Natural killer cell (primary cell): ENCODE measurements at regions of chr1 and their contacts with region 1.

Region 1: DNA sequence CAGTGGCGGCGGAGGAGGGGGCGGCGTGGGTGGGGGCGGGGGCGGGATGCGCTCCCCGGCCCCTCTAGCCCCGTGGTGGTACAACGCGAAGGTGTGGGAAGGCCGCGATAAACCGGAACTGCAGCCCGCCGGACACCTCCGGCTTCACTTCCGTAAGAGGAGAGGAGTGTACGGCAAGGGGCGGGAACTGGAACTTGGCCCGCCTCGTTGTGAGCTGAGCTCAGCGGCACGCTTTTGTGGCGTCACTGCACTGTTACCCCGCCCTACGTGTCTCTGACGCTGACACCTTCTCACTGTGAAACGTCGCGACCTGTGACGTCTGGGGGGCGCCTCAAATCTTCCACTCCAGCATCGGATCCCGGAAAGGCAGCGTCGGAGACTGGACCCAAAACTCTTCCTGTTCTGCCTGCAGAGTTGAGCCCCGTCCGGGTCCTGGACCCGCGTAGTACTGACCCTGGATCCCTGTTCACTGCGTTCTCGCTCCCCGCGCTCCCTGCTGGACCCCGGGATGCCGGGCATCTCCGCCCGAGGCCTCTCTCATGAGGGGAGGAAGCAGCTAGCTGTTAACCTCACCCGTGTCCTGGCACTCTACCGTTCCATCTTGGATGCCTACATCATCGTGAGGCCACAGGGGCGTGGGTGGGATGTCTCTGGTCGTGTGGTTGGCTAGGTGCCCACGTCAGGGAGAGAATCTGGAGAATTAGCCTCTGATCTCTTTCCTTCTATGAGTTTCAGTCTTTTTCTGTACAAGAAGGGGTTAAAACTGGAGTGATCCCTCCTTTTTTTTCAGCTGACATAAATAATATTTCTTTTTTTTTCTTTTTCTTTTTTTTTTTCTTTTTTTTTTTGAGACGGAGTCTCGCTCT is at the start of gene ISG20L2:
- DNase-seq: peak; percentile 95 to 99
- ATAC-seq: peak; percentile 92 to 98 (median 92)
- H3K4me3 ChIP-seq: peak within 1 kb of the TSS; percentile 98
- H3K4me3 Mint-ChIP-seq: peak within 1 kb of the TSS; percentile 98
- H3K27ac ChIP-seq: peak within 1 kb of the TSS; percentile 99
- H3K27ac Mint-ChIP-seq: no peak within 1 kb of the TSS
- H3K4me1 ChIP-seq: peaks cover 45% of the 10 kb centered on the region
- H3K4me1 Mint-ChIP-seq: peaks cover 15 to 24% of the 10 kb centered on the region in 2 donors
- H3K27me3 ChIP-seq: no peaks in the 10 kb centered on the region
- H3K27me3 Mint-ChIP-seq: no peaks in the 10 kb centered on the region
- CTCF ChIP-seq: no peak
- total RNA-seq, gene ISG20L2: 60.3 to 71.9 (median 68.7) TPM

Region 2: GRCh38 chr1:156282479-156283222 is 446.2 kb before region 1 on chr1 and contains the start of gene SMG5:
- intact Hi-C with region 1: loop called (anchors 5 kb)
- DNase-seq: peak; percentile 92 to 99
- ATAC-seq: peak; percentile 94 to 97 (median 96)
- H3K4me3 ChIP-seq: peak within 1 kb of the TSS; percentile 56
- H3K4me3 Mint-ChIP-seq: peak within 1 kb of the TSS; percentile 98
- H3K27ac ChIP-seq: peak within 1 kb of the TSS; percentile 85
- H3K27ac Mint-ChIP-seq: peak within 1 kb of the TSS; percentile 95 to 97
- H3K4me1 ChIP-seq: peaks cover 25% of the 10 kb centered on the region
- H3K4me1 Mint-ChIP-seq: peaks cover 43 to 45% of the 10 kb centered on the region in 2 donors
- H3K27me3 ChIP-seq: no peaks in the 10 kb centered on the region
- H3K27me3 Mint-ChIP-seq: no peaks in the 10 kb centered on the region
- CTCF ChIP-seq: no peak
- total RNA-seq, gene SMG5: 76.7 to 93.9 (median 87.6) TPM

Region 3: DNA sequence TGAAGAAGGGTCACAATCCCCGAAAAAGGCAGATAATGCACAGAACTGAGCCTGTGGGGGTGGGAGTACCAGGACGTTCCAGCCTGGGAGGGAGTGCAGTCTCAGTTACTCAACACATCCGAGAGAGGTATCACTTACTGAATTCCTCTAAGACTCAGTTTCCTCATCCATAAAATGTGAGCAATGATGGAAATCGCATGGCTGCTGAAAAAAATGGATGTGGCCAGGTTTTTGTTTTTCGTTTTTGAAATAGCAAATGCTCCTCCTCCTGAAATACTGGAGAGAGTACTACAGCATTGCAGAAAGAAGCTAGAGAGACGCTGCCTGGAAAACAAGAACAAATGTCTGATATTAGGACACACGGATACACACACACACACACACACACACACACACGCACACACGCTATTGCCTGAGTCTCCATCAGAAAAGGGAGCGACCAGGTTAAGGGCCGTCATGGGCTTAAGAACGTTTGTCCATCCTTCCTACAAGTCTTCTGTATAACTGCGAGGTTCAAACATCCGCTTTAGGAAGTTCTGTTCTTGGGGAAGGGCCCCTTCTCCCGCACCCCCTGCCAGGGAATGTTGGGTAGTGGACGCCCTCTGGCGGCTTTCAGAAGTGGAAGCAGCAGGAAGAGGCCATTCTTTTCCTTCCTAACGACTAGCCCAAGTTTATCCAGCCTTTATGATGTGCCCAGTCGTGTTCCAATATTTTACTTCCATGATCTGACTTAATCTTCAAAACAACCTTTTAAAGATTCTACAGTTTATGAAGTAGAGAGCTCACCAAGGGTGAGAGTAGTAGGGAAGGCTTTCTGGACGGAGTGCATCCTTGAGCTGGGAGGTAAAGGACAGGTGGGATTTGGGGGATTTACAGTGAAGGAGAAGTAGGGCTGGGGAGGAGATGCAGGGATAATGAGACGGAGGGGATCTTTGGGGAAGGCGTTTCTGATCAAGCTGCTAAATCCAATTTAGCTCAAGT is 50.9 kb before region 1 on chr1:
- intact Hi-C with region 1: no loop called
- DNase-seq: peak in 1 of 2 donors; percentile 65
- ATAC-seq: peak; percentile 24 to 56 (median 44)
- H3K4me3 ChIP-seq: no peak overlapping the region
- H3K4me3 Mint-ChIP-seq: no peak overlapping the region
- H3K27ac ChIP-seq: no peak overlapping the region
- H3K27ac Mint-ChIP-seq: no peak overlapping the region
- H3K4me1 ChIP-seq: peaks cover 13% of the 10 kb centered on the region
- H3K4me1 Mint-ChIP-seq: peaks cover 5 to 17% of the 10 kb centered on the region in 2 donors
- H3K27me3 ChIP-seq: peaks cover 40% of the 10 kb centered on the region
- H3K27me3 Mint-ChIP-seq: peaks cover 47 to 49% of the 10 kb centered on the region in 2 donors
- CTCF ChIP-seq: peak; percentile 52

Region 4: DNA sequence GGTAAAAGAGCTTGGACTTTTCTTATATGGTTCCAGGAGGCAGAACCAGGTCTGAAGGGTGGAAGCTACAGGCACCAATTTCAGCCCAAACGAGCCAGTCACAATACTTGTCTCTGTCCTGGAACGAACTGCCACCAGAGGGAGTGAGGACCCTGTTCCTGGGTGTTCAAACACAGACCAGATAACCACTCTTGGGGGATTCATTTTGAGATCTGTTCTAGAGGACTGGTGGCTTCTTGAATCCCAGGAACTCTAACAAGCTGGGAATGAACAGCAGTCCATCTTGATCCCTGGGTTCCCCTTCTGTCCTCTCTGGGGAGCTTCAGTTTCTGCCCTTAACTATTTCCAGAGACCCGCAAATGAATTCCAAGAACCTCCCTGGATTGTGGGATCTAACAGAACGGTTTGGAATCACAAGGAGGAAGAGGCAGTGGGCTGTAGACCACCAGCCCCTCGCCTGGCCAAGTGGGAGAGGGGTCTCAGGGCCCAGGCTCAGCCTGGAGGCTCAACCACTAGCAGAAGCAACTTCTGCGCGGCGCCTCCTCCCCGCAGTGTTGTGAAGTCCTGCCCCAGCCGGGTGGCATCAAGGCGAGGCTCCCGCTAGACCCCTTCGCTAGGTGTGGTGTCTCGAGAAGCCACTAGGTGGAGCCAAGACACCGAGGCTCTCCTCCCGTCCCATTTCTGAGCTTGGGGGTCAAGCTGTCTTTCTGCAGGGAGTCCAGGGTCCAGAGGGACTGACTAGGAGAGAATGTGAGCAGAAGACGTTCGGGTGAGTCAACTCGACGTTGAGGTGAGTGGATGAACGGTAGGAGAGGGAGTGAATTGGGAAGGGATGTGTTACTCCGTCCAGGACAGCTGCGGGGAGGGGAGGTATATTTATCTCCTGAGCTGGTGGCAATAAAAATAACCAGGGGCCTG is 39.5 kb before region 1 on chr1:
- intact Hi-C with region 1: loop called (anchors 1 kb)
- DNase-seq: peak; percentile 68 to 88
- ATAC-seq: peak; percentile 91 to 99 (median 98)
- H3K4me3 ChIP-seq: no peak overlapping the region
- H3K4me3 Mint-ChIP-seq: no peak overlapping the region
- H3K27ac ChIP-seq: no peak overlapping the region
- H3K27ac Mint-ChIP-seq: peak overlapping the region in 1 of 2 donors; percentile 21
- H3K4me1 ChIP-seq: peaks cover 8% of the 10 kb centered on the region
- H3K4me1 Mint-ChIP-seq: peaks cover 7 to 21% of the 10 kb centered on the region in 2 donors
- H3K27me3 ChIP-seq: peaks cover 50% of the 10 kb centered on the region
- H3K27me3 Mint-ChIP-seq: peaks cover 33 to 38% of the 10 kb centered on the region in 2 donors
- CTCF ChIP-seq: peak; percentile 87

Region 5: DNA sequence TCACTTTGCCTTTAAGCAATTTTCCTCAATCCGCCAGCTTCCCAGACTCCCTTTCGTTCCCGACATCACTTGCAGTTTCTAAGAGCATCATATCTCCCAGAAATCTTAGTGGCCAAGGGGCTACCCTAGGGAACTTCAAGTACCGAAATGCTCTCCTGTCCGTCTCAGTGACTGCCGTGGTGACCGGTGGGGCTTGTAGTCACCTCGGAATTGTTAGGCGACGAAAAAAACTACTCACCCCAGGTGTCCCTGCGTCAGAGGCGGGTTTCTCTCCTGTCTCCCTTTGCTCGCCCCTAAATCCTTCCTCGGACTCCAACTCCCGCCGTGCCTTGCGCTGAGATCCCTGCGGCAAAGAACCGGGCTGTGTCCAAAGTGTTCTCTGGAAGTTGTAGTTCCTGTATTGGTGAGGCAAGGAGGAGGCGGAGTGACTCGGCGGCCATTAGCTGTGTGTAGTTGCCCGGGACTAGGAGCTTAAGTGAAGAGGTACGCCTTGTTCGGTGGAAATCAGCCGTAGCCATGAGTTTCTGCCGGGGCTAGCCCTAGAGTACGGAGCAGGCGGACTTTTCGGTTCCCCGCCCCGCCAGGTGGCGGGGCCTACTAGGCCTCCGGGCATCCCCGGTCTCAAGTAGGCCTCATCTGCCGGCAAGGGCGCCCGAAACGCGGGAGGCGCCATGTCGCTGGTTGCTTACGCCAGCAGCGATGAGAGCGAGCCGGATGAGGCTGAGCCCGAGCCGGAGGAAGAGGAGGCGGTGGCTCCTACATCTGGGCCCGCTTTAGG is 38.5 kb after region 1 on chr1 and contains the start of gene PRCC:
- intact Hi-C with region 1: loop called (anchors 1 kb)
- DNase-seq: peak; percentile 94 to 99
- ATAC-seq: peak; percentile 91 to 98 (median 93)
- H3K4me3 ChIP-seq: peak within 1 kb of the TSS; percentile 86
- H3K4me3 Mint-ChIP-seq: no peak within 1 kb of the TSS
- H3K27ac ChIP-seq: peak within 1 kb of the TSS; percentile 98
- H3K27ac Mint-ChIP-seq: no peak within 1 kb of the TSS
- H3K4me1 ChIP-seq: peaks cover 33% of the 10 kb centered on the region
- H3K4me1 Mint-ChIP-seq: peaks cover 33 to 39% of the 10 kb centered on the region in 2 donors
- H3K27me3 ChIP-seq: no peaks in the 10 kb centered on the region
- H3K27me3 Mint-ChIP-seq: no peaks in the 10 kb centered on the region
- CTCF ChIP-seq: no peak
- total RNA-seq, gene PRCC: 66.5 to 92.4 (median 69.1) TPM

Region 6: GRCh38 chr1:156889802-156890585 is 161.2 kb after region 1 on chr1:
- intact Hi-C with region 1: loop called (anchors 1 kb)
- DNase-seq: peak; percentile 44 to 73
- ATAC-seq: peak; percentile 38 to 53 (median 45)
- H3K4me3 ChIP-seq: no peak overlapping the region
- H3K4me3 Mint-ChIP-seq: peak overlapping the region; percentile 29
- H3K27ac ChIP-seq: no peak overlapping the region
- H3K27ac Mint-ChIP-seq: no peak overlapping the region
- H3K4me1 ChIP-seq: peaks cover 20% of the 10 kb centered on the region
- H3K4me1 Mint-ChIP-seq: peaks cover 8 to 21% of the 10 kb centered on the region in 2 donors
- H3K27me3 ChIP-seq: peaks cover 29% of the 10 kb centered on the region
- H3K27me3 Mint-ChIP-seq: peaks cover 30 to 46% of the 10 kb centered on the region in 2 donors
- CTCF ChIP-seq: peak; percentile 78